Activated CD4-positive, alpha-beta T cell treated with anti-CD3 and anti-CD28 coated beads, Interleukin-2, amount 10 ng/mL, durations not matched to agents 24 days and 14 days (primary cell): ENCODE measurements at regions of chr20 and their contacts with region 1.

Region 1: GRCh38 chr20:62386383-62387218 is at the start of gene RPS21:
- DNase-seq: peak; percentile 98
- H3K4me3 Mint-ChIP-seq: peak within 1 kb of the TSS; percentile 98
- H3K27ac Mint-ChIP-seq: peak within 1 kb of the TSS; percentile 94
- H3K4me1 Mint-ChIP-seq: peaks cover 37% of the 10 kb centered on the region
- H3K27me3 Mint-ChIP-seq: no peaks in the 10 kb centered on the region
- total RNA-seq, gene RPS21: 2,091 and 2,109 TPM in 2 replicates

Region 2: GRCh38 chr20:62002882-62003480 is 383.6 kb before region 1 on chr20:
- intact Hi-C with region 1: loop called (anchors 5 kb)
- DNase-seq: no peak
- H3K4me3 Mint-ChIP-seq: no peak overlapping the region
- H3K27ac Mint-ChIP-seq: no peak overlapping the region
- H3K4me1 Mint-ChIP-seq: no peaks in the 10 kb centered on the region
- H3K27me3 Mint-ChIP-seq: no peaks in the 10 kb centered on the region

Region 3: GRCh38 chr20:62407221-62407992 is 20.8 kb after region 1 on chr20 and contains the start of gene CABLES2:
- intact Hi-C with region 1: loop called (anchors 1 kb)
- DNase-seq: peak; percentile 98
- H3K4me3 Mint-ChIP-seq: peak within 1 kb of the TSS; percentile 87
- H3K27ac Mint-ChIP-seq: peak within 1 kb of the TSS; percentile 89
- H3K4me1 Mint-ChIP-seq: peaks cover 24% of the 10 kb centered on the region
- H3K27me3 Mint-ChIP-seq: no peaks in the 10 kb centered on the region
- total RNA-seq, gene CABLES2: 13.1 and 13.5 TPM in 2 replicates